B cell (primary cell): ENCODE measurements at regions of chr12 and their contacts with region 1.

Region 1: GRCh38 chr12:9049520-9050133 is 60.3 kb downstream of the KLRG1 start:
- DNase-seq: peak; percentile 53
- ATAC-seq: peak; percentile 41
- H3K4me3 ChIP-seq: no peak overlapping the region
- H3K4me3 Mint-ChIP-seq: no peak overlapping the region
- H3K27ac ChIP-seq: no peak overlapping the region
- H3K27ac Mint-ChIP-seq: no peak overlapping the region
- H3K4me1 ChIP-seq: no peaks in the 10 kb centered on the region
- H3K4me1 Mint-ChIP-seq: no peaks in the 10 kb centered on the region
- H3K27me3 ChIP-seq: no peaks in the 10 kb centered on the region
- H3K27me3 Mint-ChIP-seq: peaks cover 10% of the 10 kb centered on the region
- CTCF ChIP-seq: peak; percentile 75

Region 2: GRCh38 chr12:8662593-8662992 is 387.0 kb before region 1 on chr12 and contains the start of gene MFAP5:
- CTCF ChIA-PET with region 1: interaction called, 15 read pairs
- POLR2A ChIA-PET with region 1: no interaction called
- intact Hi-C with region 1: no loop called
- DNase-seq: no peak
- ATAC-seq: no peak
- H3K4me3 ChIP-seq: no peak within 1 kb of the TSS
- H3K4me3 Mint-ChIP-seq: no peak within 1 kb of the TSS
- H3K27ac ChIP-seq: no peak within 1 kb of the TSS
- H3K27ac Mint-ChIP-seq: no peak within 1 kb of the TSS
- H3K4me1 ChIP-seq: peaks cover 6 to 8% of the 10 kb centered on the region in 2 donors
- H3K4me1 Mint-ChIP-seq: peaks cover 4% of the 10 kb centered on the region
- H3K27me3 ChIP-seq: no peaks in the 10 kb centered on the region
- H3K27me3 Mint-ChIP-seq: no peaks in the 10 kb centered on the region
- CTCF ChIP-seq: no peak
- total RNA-seq, gene MFAP5: 0.94 TPM in 1 of 2 replicates, not detected in the other

Region 3: DNA sequence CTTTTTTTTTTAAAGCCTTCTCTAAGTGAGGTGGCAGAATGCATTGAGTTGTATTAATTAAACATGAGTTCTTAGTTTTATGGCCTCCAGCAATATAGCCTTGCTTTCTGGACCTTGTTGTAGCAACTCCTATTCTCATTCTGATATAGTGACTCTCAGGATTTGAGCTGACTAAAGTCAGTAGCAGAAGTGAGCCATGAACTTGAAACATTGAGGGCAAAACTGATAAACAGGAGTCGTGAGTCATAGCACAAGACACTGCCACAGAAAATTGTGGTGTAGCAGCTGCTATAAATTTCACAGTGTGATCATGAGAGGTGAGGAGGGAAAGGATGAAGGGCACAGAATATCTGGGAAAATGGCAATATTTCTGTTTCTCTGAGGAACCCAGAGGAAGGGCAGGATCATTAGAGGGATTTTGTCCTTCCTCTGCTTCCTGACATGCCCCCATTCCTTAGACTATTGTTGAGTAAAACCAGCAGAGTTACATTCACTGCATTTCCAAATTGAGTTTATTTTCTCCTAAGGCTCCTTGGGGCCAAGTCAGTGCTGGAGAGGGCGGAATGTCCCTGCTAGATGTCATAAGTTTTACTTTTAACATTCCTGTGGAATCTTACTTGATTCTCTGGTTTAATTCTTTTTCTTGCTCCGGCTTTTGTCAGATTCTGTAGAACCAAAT is 52.8 kb before region 1 on chr12:
- CTCF ChIA-PET with region 1: no interaction called
- POLR2A ChIA-PET with region 1: no interaction called
- intact Hi-C with region 1: no loop called
- DNase-seq: no peak
- ATAC-seq: no peak
- H3K4me3 ChIP-seq: no peak overlapping the region
- H3K4me3 Mint-ChIP-seq: no peak overlapping the region
- H3K27ac ChIP-seq: no peak overlapping the region
- H3K27ac Mint-ChIP-seq: no peak overlapping the region
- H3K4me1 ChIP-seq: no peaks in the 10 kb centered on the region
- H3K4me1 Mint-ChIP-seq: no peaks in the 10 kb centered on the region
- H3K27me3 ChIP-seq: no peaks in the 10 kb centered on the region
- H3K27me3 Mint-ChIP-seq: no peaks in the 10 kb centered on the region
- CTCF ChIP-seq: no peak

Region 4: GRCh38 chr12:9331218-9331626 is 281.6 kb after region 1 on chr12:
- CTCF ChIA-PET with region 1: no interaction called
- POLR2A ChIA-PET with region 1: no interaction called
- intact Hi-C with region 1: no loop called
- DNase-seq: peak; percentile 74
- ATAC-seq: peak; percentile 84
- H3K4me3 ChIP-seq: no peak overlapping the region
- H3K4me3 Mint-ChIP-seq: no peak overlapping the region
- H3K27ac ChIP-seq: no peak overlapping the region
- H3K27ac Mint-ChIP-seq: no peak overlapping the region
- H3K4me1 ChIP-seq: peaks cover 0 to 12% of the 10 kb centered on the region in 2 donors
- H3K4me1 Mint-ChIP-seq: peaks cover 7% of the 10 kb centered on the region
- H3K27me3 ChIP-seq: peaks cover 0 to 3% (median 0%) of the 10 kb centered on the region in 4 experiments
- H3K27me3 Mint-ChIP-seq: no peaks in the 10 kb centered on the region
- CTCF ChIP-seq: peak; percentile 98